MCF 10A (cell line): ENCODE measurements at regions of chr11 and their contacts with region 1.

Region 1: DNA sequence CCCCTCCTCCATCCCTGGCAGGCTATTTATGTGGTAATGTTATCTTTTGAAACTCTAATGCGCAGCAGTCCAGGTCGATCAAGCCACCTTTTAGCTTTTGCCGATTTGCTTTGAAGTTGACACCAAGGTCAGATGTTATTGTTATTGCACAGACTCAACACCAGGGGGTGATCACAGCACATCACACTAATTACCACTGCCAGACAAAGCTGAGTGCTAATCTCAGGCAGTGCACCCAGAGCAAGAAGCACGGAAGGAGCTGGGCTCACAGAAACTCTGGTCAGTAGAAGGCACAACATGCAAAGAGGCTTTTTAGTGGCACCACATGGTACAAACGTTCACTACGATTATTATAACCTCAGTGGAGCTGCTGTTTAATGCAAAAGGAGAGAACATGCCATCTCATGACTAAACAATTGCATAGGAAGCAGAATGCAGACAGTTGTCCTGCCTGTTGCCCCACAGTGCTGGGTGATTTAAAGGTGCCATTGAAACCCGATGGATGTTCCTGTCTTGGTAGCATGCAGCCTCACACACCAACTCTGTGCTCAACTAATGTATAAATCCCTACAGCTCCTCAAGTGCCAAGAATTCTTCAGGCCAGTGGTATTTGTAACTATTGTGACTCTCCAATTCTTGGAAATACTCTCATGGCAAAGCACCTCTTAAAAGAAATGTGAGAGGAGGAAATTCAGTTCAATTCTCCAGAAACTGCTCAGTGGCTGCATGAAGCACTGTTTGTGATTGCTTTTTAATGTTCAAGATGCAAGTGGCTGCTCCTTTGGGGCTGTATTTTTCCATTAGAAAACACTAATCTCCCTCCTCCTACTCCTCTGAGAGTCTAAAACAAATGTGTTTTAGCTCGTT is 353.9 kb upstream of the DDI1 start:
- DNase-seq: peak; percentile 79
- H3K4me3 Mint-ChIP-seq: no peak overlapping the region
- H3K27ac Mint-ChIP-seq: no peak overlapping the region
- H3K4me1 Mint-ChIP-seq: peaks cover 8% of the 10 kb centered on the region
- H3K27me3 Mint-ChIP-seq: no peaks in the 10 kb centered on the region
- CTCF ChIP-seq: peak; percentile 80

Region 2: DNA sequence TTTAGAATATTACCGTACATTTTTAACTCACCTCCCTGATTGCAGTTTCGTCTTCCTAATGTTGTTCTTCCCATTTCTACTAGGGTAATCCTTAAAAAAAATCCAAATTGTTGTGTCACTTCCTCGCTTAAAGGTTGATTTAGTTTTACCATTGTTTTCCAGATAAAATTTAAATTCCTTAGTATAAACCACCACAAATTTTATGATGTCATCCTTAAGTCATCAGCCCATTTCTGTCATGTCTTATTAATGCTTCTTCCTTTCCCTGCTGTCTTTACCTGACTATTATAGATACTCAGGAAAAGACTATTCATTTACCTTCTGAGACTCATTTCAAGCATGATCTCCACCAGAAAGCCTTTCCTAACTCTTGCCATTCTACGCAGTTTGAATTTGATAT is 252.1 kb before region 1 on chr11:
- CTCF ChIA-PET with region 1: no interaction called
- POLR2A ChIA-PET with region 1: no interaction called
- intact Hi-C with region 1: no loop called
- DNase-seq: no peak
- H3K4me3 Mint-ChIP-seq: no peak overlapping the region
- H3K27ac Mint-ChIP-seq: no peak overlapping the region
- H3K4me1 Mint-ChIP-seq: peaks cover 8% of the 10 kb centered on the region
- H3K27me3 Mint-ChIP-seq: no peaks in the 10 kb centered on the region
- CTCF ChIP-seq: no peak

Region 3: GRCh38 chr11:103671143-103671651 is 11.4 kb before region 1 on chr11:
- CTCF ChIA-PET with region 1: interaction called, 23 read pairs
- POLR2A ChIA-PET with region 1: interaction called, 3 read pairs
- intact Hi-C with region 1: no loop called
- DNase-seq: no peak
- H3K4me3 Mint-ChIP-seq: no peak overlapping the region
- H3K27ac Mint-ChIP-seq: no peak overlapping the region
- H3K4me1 Mint-ChIP-seq: no peaks in the 10 kb centered on the region
- H3K27me3 Mint-ChIP-seq: no peaks in the 10 kb centered on the region
- CTCF ChIP-seq: peak; percentile 17

Region 4: DNA sequence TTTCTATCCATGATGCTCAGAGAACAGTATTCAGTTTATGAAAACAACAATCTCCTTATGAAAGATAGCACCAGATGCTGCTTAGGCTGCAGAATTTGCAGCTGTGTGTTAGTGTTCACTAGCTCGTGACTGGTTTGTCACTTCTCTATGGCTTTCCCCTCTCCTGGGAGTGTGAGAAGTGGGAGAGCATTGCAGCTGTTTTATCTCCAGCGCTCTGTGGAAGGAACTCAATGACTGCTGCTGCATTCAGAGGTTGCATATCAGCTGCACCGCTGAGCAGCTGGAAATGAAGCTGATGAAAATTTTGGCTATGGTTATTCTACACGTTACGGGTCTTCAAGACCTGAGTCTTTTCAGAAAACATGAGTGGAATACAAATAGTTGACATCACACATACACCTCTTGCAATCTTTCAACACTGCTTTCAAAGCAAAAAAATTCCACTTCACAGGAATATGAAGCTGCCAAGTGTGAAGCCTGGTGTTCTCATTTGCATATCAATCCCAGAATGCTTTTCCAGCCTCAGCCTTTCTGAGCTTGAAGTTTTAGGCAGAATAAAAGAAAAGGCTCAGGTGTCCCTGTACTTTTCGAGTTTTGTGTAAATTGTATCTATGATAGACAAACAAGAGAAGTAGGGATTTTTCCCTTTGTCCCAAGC is 204.6 kb after region 1 on chr11:
- CTCF ChIA-PET with region 1: no interaction called
- POLR2A ChIA-PET with region 1: no interaction called
- intact Hi-C with region 1: loop called (anchors 10 kb)
- DNase-seq: no peak
- H3K4me3 Mint-ChIP-seq: no peak overlapping the region
- H3K27ac Mint-ChIP-seq: no peak overlapping the region
- H3K4me1 Mint-ChIP-seq: no peaks in the 10 kb centered on the region
- H3K27me3 Mint-ChIP-seq: no peaks in the 10 kb centered on the region
- CTCF ChIP-seq: no peak

Region 5: DNA sequence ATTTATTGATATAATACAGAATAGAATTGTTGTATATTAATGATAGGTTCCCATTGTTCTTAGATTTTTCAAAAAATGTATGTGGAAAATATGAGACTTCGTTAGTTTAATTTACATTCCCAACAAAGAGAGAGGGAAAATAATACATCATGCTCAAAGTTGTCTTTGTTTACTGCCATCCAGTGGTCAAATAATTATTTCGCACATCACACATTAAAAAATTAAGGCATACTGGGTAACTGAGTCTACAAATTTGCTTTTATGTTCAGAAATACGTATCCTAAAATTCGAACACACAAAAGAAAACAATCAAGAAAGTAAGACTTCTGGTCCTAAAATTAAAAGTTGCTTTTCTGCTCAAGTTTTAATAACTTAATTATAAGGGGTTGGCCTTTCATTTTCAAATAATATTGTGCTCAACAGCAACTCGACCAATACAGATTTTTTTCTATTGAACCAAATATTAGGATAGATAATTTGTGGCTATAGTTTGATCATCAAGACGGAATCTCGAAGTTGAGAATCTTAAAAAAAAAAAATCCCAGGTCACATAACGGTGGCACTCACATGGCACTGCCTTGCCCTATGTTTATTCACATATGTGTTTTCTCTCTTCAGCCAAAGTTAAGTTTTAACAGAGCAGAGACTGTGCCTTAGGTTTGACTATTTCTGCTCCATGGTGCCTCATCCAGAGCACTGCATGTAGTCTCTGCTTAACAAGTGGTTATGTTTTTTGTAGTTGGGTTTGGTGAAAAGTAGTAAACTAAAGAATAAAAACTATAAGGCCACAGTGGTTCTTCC is 469.1 kb after region 1 on chr11:
- CTCF ChIA-PET with region 1: interaction called, 18 read pairs
- POLR2A ChIA-PET with region 1: interaction called, 6 read pairs
- intact Hi-C with region 1: loop called (anchors 1 kb)
- DNase-seq: peak; percentile 43
- H3K4me3 Mint-ChIP-seq: no peak overlapping the region
- H3K27ac Mint-ChIP-seq: no peak overlapping the region
- H3K4me1 Mint-ChIP-seq: no peaks in the 10 kb centered on the region
- H3K27me3 Mint-ChIP-seq: no peaks in the 10 kb centered on the region
- CTCF ChIP-seq: peak; percentile 51

Region 6: GRCh38 chr11:104256525-104256924 is 574.0 kb after region 1 on chr11:
- CTCF ChIA-PET with region 1: interaction called, 3 read pairs
- POLR2A ChIA-PET with region 1: no interaction called
- intact Hi-C with region 1: loop called (anchors 1 kb)
- DNase-seq: peak; percentile 17
- H3K4me3 Mint-ChIP-seq: no peak overlapping the region
- H3K27ac Mint-ChIP-seq: no peak overlapping the region
- H3K4me1 Mint-ChIP-seq: no peaks in the 10 kb centered on the region
- H3K27me3 Mint-ChIP-seq: no peaks in the 10 kb centered on the region
- CTCF ChIP-seq: no peak